OCI-LY7 (cell line): ENCODE measurements at regions of chr3 and their contacts with region 1.

Region 1: GRCh38 chr3:5181469-5182141 is 5.9 kb upstream of the EDEM1 start:
- DNase-seq: peak; percentile 92
- H3K4me3 ChIP-seq: peak overlapping the region; percentile 51
- H3K27ac ChIP-seq: peak overlapping the region; percentile 98
- H3K4me1 ChIP-seq: peaks cover 98% of the 10 kb centered on the region
- CTCF ChIP-seq: no peak

Region 2: GRCh38 chr3:5122030-5122740 is 59.4 kb before region 1 on chr3 and contains the start of gene ARL8B:
- CTCF ChIA-PET with region 1: interaction called, 3 read pairs
- POLR2A ChIA-PET with region 1: interaction called, 23 read pairs
- intact Hi-C with region 1: no loop called
- DNase-seq: peak; percentile 92
- H3K4me3 ChIP-seq: peak within 1 kb of the TSS; percentile 99
- H3K27ac ChIP-seq: peak within 1 kb of the TSS; percentile 31
- H3K4me1 ChIP-seq: peaks cover 27% of the 10 kb centered on the region
- CTCF ChIP-seq: peak; percentile 95
- total RNA-seq, gene ARL8B: 20.1 and 27.1 TPM in 2 replicates

Region 3: GRCh38 chr3:5136211-5136918 is 45.2 kb before region 1 on chr3:
- CTCF ChIA-PET with region 1: interaction called, 12 read pairs
- POLR2A ChIA-PET with region 1: interaction called, 28 read pairs
- intact Hi-C with region 1: no loop called
- DNase-seq: peak; percentile 83
- H3K4me3 ChIP-seq: no peak overlapping the region
- H3K27ac ChIP-seq: peak overlapping the region; percentile 53
- H3K4me1 ChIP-seq: peaks cover 47% of the 10 kb centered on the region
- CTCF ChIP-seq: peak; percentile 92

Region 4: DNA sequence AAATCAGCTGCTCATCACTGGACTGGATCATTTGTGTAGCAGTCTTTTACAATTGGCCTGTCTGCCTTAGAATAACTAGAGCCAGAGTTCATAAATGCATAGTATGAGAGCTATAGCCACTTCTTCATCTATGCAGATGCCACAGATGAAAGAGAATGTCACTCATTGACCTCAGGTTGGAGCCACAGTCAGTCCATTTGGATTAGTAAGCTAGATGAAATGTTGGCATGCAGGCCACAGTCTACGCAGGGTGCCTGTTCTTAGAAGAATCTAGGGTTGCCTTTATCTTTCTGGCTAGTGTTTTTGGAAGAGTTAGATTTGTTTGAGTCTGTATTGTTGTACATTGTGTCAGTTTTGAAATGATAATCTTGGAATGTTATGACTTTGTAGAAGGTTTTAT is 19.5 kb before region 1 on chr3:
- CTCF ChIA-PET with region 1: no interaction called
- POLR2A ChIA-PET with region 1: interaction called, 67 read pairs
- intact Hi-C with region 1: no loop called
- DNase-seq: no peak
- H3K4me3 ChIP-seq: no peak overlapping the region
- H3K27ac ChIP-seq: no peak overlapping the region
- H3K4me1 ChIP-seq: peaks cover 61% of the 10 kb centered on the region
- CTCF ChIP-seq: no peak

Region 5: GRCh38 chr3:5168110-5168509 is 13.5 kb before region 1 on chr3:
- CTCF ChIA-PET with region 1: interaction called, 3 read pairs
- POLR2A ChIA-PET with region 1: interaction called, 67 read pairs
- intact Hi-C with region 1: no loop called
- DNase-seq: no peak
- H3K4me3 ChIP-seq: no peak overlapping the region
- H3K27ac ChIP-seq: peak overlapping the region; percentile 3
- H3K4me1 ChIP-seq: peaks cover 56% of the 10 kb centered on the region
- CTCF ChIP-seq: no peak